ENCODE measurements at regions of chr1 and their contacts with region 1.

Region 1: DNA sequence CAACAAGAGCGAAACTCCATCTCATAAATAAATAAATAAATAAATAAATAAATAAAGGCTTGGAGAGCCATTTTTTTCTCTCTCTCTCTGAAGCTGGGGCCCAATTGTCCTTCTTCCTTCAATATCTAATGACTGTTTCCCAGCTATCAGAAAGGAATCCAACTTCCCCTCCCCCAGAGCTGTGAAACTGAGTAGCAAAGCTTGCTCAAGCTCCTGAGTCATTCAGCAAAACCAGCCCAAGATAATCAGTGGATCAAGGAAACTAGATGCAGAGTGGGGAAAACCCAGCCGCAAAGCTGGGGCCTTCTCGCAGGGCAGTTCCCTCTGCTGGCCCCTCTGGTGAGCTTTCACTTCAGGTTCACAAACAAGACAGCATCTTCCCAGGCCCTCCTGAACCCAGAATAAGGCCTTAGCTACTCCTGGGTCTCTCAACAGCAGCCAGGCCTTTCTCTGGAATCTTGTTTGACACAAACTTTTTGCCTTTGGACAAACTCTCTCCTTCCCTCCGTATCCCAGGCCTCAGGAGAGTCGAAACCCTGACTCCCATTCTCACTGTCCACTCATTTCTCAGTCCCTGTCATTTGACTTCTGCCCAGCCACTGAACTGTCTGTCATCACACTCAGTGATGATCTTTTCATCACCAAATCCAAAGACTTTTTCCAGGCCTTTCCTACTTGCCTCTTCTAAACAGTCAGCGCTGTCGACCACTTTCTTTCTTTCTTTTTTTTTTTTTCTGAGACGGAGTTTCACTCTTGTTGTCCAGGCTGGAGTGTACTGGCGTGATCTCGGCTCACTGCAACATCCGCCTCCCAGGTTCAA is 18.0 kb upstream of the PTP4A2 start:
- DNase-seq: peak; percentile 84
- H3K4me3 Mint-ChIP-seq: peak overlapping the region; percentile 32
- H3K27ac Mint-ChIP-seq: peak overlapping the region; percentile 90
- H3K4me1 Mint-ChIP-seq: peaks cover 67% of the 10 kb centered on the region
- H3K27me3 Mint-ChIP-seq: no peaks in the 10 kb centered on the region

Region 2: DNA sequence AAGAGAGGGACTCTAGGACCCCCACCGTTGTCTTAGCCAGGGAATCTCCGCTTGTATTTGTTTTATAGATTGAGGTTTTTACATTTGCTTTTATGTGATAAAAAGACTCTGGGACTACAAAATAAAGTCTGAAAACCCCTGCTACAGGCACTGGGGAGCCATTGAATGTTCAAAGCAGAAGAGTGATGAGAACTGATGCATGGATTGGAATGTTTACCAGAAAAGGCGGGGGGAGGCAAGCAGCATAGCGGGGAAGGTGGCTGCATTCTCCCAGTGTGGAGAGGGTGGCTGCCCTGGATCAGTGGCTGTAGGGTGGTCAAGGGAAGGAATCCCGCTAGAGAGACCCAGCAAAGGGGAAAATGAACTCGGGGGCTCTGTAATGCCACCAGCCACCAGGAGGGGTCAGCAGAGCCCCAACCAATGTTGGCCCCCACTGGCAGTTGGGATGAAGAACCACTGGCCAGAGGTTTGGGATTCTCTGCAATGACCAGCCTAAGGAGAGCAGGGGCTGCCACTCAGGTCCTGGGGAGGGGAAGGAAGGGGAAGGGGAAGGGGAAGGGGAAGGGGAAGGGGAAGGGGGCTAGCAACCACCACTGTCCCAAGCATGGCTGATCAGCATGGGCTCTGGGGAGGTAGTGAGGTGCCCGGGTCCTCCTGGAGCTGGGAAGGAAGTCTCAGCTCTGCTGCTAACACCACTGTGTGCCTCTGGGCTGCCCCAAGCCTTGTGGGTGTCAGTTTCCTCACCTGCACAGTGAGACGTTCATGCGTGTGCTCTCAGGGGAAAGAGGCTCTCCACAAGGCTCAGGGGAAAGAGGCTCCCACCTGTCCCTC is 292.3 kb before region 1 on chr1:
- intact Hi-C with region 1: loop called (anchors 5 kb)
- DNase-seq: peak; percentile 26
- H3K4me3 Mint-ChIP-seq: no peak overlapping the region
- H3K27ac Mint-ChIP-seq: no peak overlapping the region
- H3K4me1 Mint-ChIP-seq: no peaks in the 10 kb centered on the region
- H3K27me3 Mint-ChIP-seq: peaks cover 1% of the 10 kb centered on the region

Region 3: DNA sequence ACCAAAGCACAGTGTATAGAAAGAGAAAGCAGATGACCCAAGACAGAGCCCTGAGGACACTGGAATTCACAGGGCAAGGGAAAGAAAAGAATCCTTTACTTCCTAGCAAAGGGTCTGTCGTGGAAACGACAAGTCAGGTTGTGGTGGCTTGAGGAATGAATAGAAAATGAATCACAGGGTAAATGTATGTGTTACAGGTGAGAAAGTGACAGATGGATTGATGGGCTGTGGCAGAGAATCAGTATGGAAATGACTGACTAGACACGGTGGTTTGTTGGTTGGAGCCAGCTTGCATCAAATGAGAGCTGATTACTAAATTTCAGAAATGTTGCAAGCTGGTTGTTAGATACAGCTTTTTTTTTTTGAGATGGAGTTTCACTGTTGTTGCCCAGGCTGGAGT is 64.8 kb before region 1 on chr1:
- intact Hi-C with region 1: loop called (anchors 1 kb)
- DNase-seq: peak; percentile 21
- H3K4me3 Mint-ChIP-seq: no peak overlapping the region
- H3K27ac Mint-ChIP-seq: peak overlapping the region; percentile 52
- H3K4me1 Mint-ChIP-seq: peaks cover 32% of the 10 kb centered on the region
- H3K27me3 Mint-ChIP-seq: no peaks in the 10 kb centered on the region

Region 4: GRCh38 chr1:31910933-31911332 is 45.2 kb before region 1 on chr1:
- intact Hi-C with region 1: loop called (anchors 1 kb)
- DNase-seq: no peak
- H3K4me3 Mint-ChIP-seq: peak overlapping the region; percentile 37
- H3K27ac Mint-ChIP-seq: peak overlapping the region; percentile 75
- H3K4me1 Mint-ChIP-seq: peaks cover 59% of the 10 kb centered on the region
- H3K27me3 Mint-ChIP-seq: no peaks in the 10 kb centered on the region

Region 5: DNA sequence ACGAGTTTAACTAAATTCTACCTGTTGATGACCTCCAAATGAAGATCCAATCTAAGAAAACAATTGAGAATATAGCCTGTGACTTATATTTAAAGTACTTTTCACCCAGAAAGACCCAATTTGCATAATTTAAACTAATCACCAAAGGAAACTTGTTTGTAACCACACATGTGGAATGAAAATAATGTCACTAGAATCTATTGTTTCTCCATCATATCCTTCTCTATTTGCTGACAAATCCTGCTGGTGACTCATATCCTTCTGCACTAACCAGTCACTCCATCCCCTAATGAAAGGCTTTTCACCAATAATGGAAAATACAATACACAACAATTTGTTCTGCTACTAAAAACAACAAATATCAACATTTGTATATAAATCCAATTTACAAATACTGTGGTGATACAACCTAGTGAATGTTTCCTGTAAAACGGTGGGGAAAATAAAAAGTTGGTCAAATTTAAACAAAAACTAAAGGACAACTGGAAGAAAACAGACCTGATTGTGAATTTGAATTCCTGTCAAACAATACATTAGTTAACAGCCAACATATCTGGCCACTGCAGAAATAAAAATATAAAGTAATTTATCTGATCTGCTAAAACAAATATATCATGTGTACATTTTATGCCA is 24.4 kb before region 1 on chr1:
- intact Hi-C with region 1: loop called (anchors 1 kb)
- DNase-seq: no peak
- H3K4me3 Mint-ChIP-seq: peak overlapping the region; percentile 75
- H3K27ac Mint-ChIP-seq: peak overlapping the region; percentile 92
- H3K4me1 Mint-ChIP-seq: peaks cover 81% of the 10 kb centered on the region
- H3K27me3 Mint-ChIP-seq: no peaks in the 10 kb centered on the region

Region 6: DNA sequence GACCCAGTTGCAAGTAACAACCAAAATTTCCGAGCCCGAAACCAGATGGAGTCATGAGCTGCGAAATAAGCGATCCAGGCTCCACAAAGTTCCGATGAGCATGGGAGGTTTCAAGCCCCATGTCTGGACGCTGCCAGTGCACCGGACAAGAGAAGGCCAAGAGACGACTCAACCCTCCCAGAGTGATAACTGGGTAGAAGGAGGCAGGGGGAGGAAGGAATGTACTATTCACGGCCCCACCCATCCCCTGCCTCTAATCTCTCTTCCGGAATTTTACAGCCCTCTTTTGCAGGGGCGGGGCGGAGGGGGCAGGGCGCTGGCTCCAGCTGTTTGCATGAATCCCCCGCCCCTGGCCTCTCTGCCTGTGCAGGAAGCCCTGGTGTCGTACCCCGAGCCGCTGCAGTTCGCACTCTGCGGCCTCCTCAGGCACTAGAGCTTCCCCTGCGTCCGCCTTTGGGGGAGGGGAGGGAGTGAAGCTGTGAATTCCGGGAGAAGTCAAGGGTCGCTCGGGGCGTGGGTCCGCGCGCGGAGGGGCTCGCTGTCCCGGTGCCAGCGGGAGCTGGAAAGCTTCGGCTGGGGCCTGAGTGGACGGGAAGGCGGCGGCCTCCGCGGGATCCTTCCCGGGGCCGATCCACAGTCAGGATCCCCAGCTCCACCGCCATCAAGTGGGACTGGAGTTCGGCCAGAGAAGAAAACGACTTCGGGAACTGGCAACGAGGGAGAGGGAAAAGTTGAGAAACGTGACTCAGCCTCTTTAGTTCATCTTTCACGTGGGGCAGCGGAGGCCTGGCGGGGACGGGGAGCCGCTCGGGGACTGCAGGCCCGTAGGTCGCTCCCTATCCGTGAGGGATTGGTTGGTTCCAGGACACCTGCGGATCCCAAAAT is 11.7 kb before region 1 on chr1:
- intact Hi-C with region 1: loop called (anchors 1 kb)
- DNase-seq: peak; percentile 87
- H3K4me3 Mint-ChIP-seq: peak overlapping the region; percentile 78
- H3K27ac Mint-ChIP-seq: peak overlapping the region; percentile 94
- H3K4me1 Mint-ChIP-seq: peaks cover 39% of the 10 kb centered on the region
- H3K27me3 Mint-ChIP-seq: no peaks in the 10 kb centered on the region

Region 7: DNA sequence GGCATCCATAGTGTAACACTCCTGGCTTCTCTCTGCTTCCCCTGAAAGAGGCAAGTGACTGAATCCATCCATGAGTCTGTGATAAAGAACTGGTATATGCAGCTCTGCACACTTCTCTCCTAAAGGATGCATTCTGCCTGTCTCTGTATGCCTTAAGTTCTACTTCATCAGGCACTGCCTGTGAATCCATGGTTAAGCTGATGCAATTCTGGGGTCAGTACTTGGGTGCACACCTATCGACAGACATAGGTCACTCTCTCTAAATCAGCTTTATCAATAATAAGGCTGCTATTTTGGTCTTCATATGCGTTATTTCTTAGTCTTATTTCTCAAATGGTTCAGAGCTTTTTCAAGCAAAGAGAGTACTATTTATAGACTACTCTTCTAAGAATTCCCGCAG is 14.7 kb after region 1 on chr1:
- intact Hi-C with region 1: no loop called
- DNase-seq: no peak
- H3K4me3 Mint-ChIP-seq: no peak overlapping the region
- H3K27ac Mint-ChIP-seq: no peak overlapping the region
- H3K4me1 Mint-ChIP-seq: peaks cover 8% of the 10 kb centered on the region
- H3K27me3 Mint-ChIP-seq: peaks cover 3% of the 10 kb centered on the region